ENCODE measurements at regions of chrX and their contacts with region 1.

Region 1: GRCh38 chrX:74550295-74550802 is 64.1 kb downstream of the RLIM start:
- DNase-seq: peak; percentile 77
- H3K4me3 ChIP-seq: no peak overlapping the region
- H3K27ac ChIP-seq: no peak overlapping the region
- H3K4me1 ChIP-seq: no peaks in the 10 kb centered on the region
- H3K27me3 ChIP-seq: no peaks in the 10 kb centered on the region
- CTCF ChIP-seq: peak; percentile 80 to 94
- POLR2A ChIP-seq: no peak

Region 2: GRCh38 chrX:74133156-74133796 is 417.1 kb before region 1 on chrX:
- CTCF ChIA-PET with region 1: no interaction called
- POLR2A ChIA-PET with region 1: no interaction called
- dilution Hi-C with region 1: no loop called
- intact Hi-C with region 1: loop called (anchors 10 kb)
- DNase-seq: peak; percentile 39
- H3K4me3 ChIP-seq: no peak overlapping the region
- H3K27ac ChIP-seq: no peak overlapping the region
- H3K4me1 ChIP-seq: no peaks in the 10 kb centered on the region
- H3K27me3 ChIP-seq: no peaks in the 10 kb centered on the region
- CTCF ChIP-seq: peak; percentile 23 to 34
- POLR2A ChIP-seq: no peak

Region 3: DNA sequence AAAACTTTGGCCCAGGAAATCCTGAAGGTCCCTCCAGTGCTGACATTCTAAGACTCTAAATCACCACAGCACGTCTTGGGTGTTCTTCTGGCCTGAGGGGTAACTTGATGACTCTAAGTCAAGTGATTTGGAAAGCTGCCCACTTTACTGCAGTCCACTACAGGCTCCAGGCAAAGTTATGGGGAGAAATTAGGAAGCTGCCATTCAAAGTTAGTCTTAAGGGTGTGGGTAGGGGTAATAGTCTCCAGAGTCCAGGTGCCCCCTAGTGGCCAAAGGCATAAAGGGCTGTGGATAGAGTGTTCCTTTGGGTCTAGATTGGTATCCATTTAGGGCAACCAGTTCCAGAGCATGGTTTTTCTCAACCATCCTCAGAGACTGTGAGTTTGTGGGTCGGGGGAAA is 167.7 kb before region 1 on chrX:
- CTCF ChIA-PET with region 1: no interaction called
- POLR2A ChIA-PET with region 1: no interaction called
- dilution Hi-C with region 1: no loop called
- intact Hi-C with region 1: loop called (anchors 1 kb)
- DNase-seq: peak; percentile 34
- H3K4me3 ChIP-seq: no peak overlapping the region
- H3K27ac ChIP-seq: no peak overlapping the region
- H3K4me1 ChIP-seq: no peaks in the 10 kb centered on the region
- H3K27me3 ChIP-seq: no peaks in the 10 kb centered on the region
- CTCF ChIP-seq: peak; percentile 55 to 73
- POLR2A ChIP-seq: no peak

Region 4: GRCh38 chrX:74492720-74493201 is 57.6 kb before region 1 on chrX:
- CTCF ChIA-PET with region 1: no interaction called
- POLR2A ChIA-PET with region 1: no interaction called
- dilution Hi-C with region 1: no loop called
- intact Hi-C with region 1: loop called (anchors 1 kb)
- DNase-seq: no peak
- H3K4me3 ChIP-seq: no peak overlapping the region
- H3K27ac ChIP-seq: no peak overlapping the region
- H3K4me1 ChIP-seq: no peaks in the 10 kb centered on the region
- H3K27me3 ChIP-seq: no peaks in the 10 kb centered on the region
- CTCF ChIP-seq: no peak
- POLR2A ChIP-seq: no peak

Region 5: GRCh38 chrX:75603833-75604232 is 1053.5 kb after region 1 on chrX:
- CTCF ChIA-PET with region 1: no interaction called
- POLR2A ChIA-PET with region 1: no interaction called
- dilution Hi-C with region 1: no loop called
- intact Hi-C with region 1: loop called (anchors 5 kb)
- DNase-seq: peak; percentile 4
- H3K4me3 ChIP-seq: no peak overlapping the region
- H3K27ac ChIP-seq: no peak overlapping the region
- H3K4me1 ChIP-seq: no peaks in the 10 kb centered on the region
- H3K27me3 ChIP-seq: no peaks in the 10 kb centered on the region
- CTCF ChIP-seq: peak; percentile 26
- POLR2A ChIP-seq: no peak

Measured in endothelial cell of umbilical vein (primary cell).